GM12878 (cell line): ENCODE measurements at regions of chr20 and their contacts with region 1.

Region 1: DNA sequence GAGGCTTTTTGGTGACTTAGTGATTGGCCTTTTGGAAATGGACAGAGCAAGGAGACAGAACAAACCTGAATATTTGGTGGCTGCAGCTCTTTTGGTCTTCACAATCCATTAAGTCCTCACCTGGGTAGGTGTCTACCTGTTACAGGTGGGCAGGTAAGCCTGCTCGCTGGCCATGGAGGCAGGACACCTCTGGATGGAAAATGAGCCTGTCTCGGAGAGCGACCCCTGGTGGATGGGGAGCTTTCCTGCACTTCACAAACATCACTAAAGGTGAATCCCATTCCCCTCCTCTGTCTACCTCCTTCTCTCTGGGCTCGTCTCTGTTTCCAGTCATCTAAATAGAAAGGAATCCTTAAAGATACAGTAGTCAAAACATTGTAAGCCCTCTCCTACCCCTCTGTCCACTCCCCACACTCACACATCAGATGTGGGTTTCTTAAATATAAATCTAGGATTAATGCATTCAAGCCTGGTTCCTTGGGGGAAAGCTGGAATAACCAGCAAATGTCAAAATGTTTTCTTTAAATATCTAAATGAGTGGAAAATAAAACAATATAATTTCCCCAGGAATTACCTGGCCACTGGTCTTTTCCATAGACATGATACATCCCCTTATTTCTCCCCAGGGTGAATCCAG is 304.9 kb downstream of the CDH26 start:
- DNase-seq: no peak
- ATAC-seq: no peak
- H3K4me3 ChIP-seq: no peak overlapping the region
- H3K27ac ChIP-seq: no peak overlapping the region
- H3K4me1 ChIP-seq: no peaks in the 10 kb centered on the region
- H3K27me3 ChIP-seq: no peaks in the 10 kb centered on the region
- CTCF ChIP-seq: peak; percentile 50 to 69 (median 69); a peak in 5 of 6 replicates
- EP300 ChIP-seq: no peak
- POLR2A ChIP-seq: no peak
- RAD21 ChIP-seq: peak; percentile 47

Region 2: GRCh38 chr20:60137629-60138245 is 125.3 kb before region 1 on chr20:
- CTCF ChIA-PET with region 1: interaction called, 14 read pairs
- POLR2A ChIA-PET with region 1: no interaction called
- RAD21 ChIA-PET with region 1: interaction called, 3 read pairs
- SMC1A ChIA-PET with region 1: interaction called, 13 read pairs
- in situ Hi-C with region 1: no loop called
- intact Hi-C with region 1: no loop called
- DNase-seq: no peak
- ATAC-seq: peak; percentile 38; the same call in 2 of the 3 replicates
- H3K4me3 ChIP-seq: peak overlapping the region; percentile 67; the same call in 1 of the 2 replicates
- H3K27ac ChIP-seq: no peak overlapping the region
- H3K4me1 ChIP-seq: no peaks in the 10 kb centered on the region
- H3K27me3 ChIP-seq: no peaks in the 10 kb centered on the region
- CTCF ChIP-seq: peak; percentile 44 to 73 (median 51); a peak in 4 of 6 replicates
- EP300 ChIP-seq: no peak
- POLR2A ChIP-seq: no peak
- RAD21 ChIP-seq: peak; percentile 63